ENCODE measurements at regions of chr12 and their contacts with region 1.

Region 1: GRCh38 chr12:115752913-115753726 is 524.4 kb downstream of the MED13L start:
- DNase-seq: peak; percentile 77
- ATAC-seq: peak; percentile 100
- H3K4me3 ChIP-seq: no peak overlapping the region
- H3K27ac ChIP-seq: no peak overlapping the region
- H3K4me1 ChIP-seq: no peaks in the 10 kb centered on the region
- H3K27me3 ChIP-seq: peaks cover 12% of the 10 kb centered on the region
- CTCF ChIP-seq: peak; percentile 81
- POLR2A ChIP-seq: no peak
- RAD21 ChIP-seq: peak; percentile 93

Region 2: GRCh38 chr12:113980537-113981337 is 1772.4 kb before region 1 on chr12:
- CTCF ChIA-PET with region 1: no interaction called
- POLR2A ChIA-PET with region 1: no interaction called
- dilution Hi-C with region 1: no loop called
- in situ Hi-C with region 1: loop called (anchors 25 kb)
- intact Hi-C with region 1: loop called (anchors 5 kb)
- DNase-seq: peak; percentile 74
- ATAC-seq: peak; percentile 96
- H3K4me3 ChIP-seq: no peak overlapping the region
- H3K27ac ChIP-seq: no peak overlapping the region
- H3K4me1 ChIP-seq: no peaks in the 10 kb centered on the region
- H3K27me3 ChIP-seq: peaks cover 15% of the 10 kb centered on the region
- CTCF ChIP-seq: peak; percentile 99
- POLR2A ChIP-seq: peak; percentile 55; the same call in 1 of the 2 replicates
- RAD21 ChIP-seq: peak; percentile 99

Region 3: GRCh38 chr12:114662512-114663177 is 1090.5 kb before region 1 on chr12:
- CTCF ChIA-PET with region 1: no interaction called
- POLR2A ChIA-PET with region 1: no interaction called
- dilution Hi-C with region 1: no loop called
- in situ Hi-C with region 1: no loop called
- intact Hi-C with region 1: loop called (anchors 1 kb)
- DNase-seq: peak; percentile 91
- ATAC-seq: peak; percentile 89
- H3K4me3 ChIP-seq: no peak overlapping the region
- H3K27ac ChIP-seq: no peak overlapping the region
- H3K4me1 ChIP-seq: peaks cover under 1% of the 10 kb centered on the region; the same call in 1 of the 2 replicates
- H3K27me3 ChIP-seq: no peaks in the 10 kb centered on the region
- CTCF ChIP-seq: peak; percentile 98
- POLR2A ChIP-seq: peak; percentile 69
- RAD21 ChIP-seq: peak; percentile 100

Region 4: GRCh38 chr12:114674239-114675047 is 1078.7 kb before region 1 on chr12:
- CTCF ChIA-PET with region 1: interaction called, 3 read pairs
- POLR2A ChIA-PET with region 1: no interaction called
- dilution Hi-C with region 1: no loop called
- in situ Hi-C with region 1: loop called (anchors 5 kb)
- intact Hi-C with region 1: no loop called
- DNase-seq: peak; percentile 64
- ATAC-seq: no peak
- H3K4me3 ChIP-seq: peak overlapping the region; percentile 17
- H3K27ac ChIP-seq: peak overlapping the region; percentile 92
- H3K4me1 ChIP-seq: peaks cover 16% of the 10 kb centered on the region
- H3K27me3 ChIP-seq: no peaks in the 10 kb centered on the region
- CTCF ChIP-seq: no peak
- POLR2A ChIP-seq: peak; percentile 42; the same call in 1 of the 2 replicates
- RAD21 ChIP-seq: no peak

Region 5: DNA sequence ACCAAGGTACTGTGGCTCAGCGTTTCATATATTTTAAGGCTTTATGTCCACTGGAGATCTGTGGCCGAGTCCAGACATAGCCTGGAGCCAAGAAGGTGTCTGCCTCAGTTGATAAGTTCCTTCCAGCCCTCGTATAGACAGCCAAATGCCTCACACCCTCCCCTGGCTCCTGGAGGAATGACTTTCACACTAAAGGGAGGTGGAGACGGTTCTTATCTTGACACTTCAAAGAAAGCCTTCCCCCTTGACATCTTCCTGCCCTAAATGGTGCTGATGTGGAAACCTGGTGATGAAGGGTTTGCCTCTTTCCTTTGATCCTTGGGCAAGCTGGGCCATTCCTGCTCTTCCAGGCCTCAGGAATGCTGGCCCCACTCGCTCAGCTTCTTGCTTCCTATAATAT is 594.3 kb before region 1 on chr12:
- CTCF ChIA-PET with region 1: no interaction called
- POLR2A ChIA-PET with region 1: no interaction called
- dilution Hi-C with region 1: no loop called
- in situ Hi-C with region 1: no loop called
- intact Hi-C with region 1: no loop called
- DNase-seq: no peak
- ATAC-seq: no peak
- H3K4me3 ChIP-seq: no peak overlapping the region
- H3K27ac ChIP-seq: no peak overlapping the region
- H3K4me1 ChIP-seq: no peaks in the 10 kb centered on the region; the same call in 1 of the 2 replicates
- H3K27me3 ChIP-seq: no peaks in the 10 kb centered on the region
- CTCF ChIP-seq: no peak
- POLR2A ChIP-seq: no peak
- RAD21 ChIP-seq: no peak

Region 6: DNA sequence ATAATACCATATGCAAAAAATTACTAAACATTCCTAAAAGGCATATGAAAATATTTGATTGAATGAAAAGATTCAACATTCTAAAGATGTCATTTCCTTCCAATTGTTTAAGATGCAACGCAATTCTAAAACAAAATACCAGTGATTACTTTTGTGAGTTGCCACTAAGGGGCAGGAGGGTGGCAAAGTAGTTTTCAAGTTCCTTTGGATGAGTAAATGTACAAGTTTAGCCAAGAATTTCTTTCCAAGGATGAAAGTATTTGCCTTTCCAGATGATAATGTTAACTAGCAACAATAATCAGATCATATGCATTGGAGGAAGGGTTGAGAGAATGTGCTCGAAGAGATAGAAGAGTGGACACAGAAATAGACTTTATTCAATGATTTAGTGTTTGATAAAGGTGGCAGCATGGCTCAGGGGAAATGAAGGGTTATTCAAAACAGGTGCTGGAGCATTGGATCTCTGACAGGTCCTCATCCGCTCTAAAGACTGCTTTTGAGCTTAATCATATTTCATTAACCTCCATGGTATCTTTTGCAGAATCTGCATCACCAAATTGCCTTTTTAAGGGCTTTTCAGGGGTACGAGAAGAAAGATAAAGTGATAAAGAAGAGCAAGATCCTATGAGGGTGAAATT is 390.7 kb before region 1 on chr12:
- CTCF ChIA-PET with region 1: no interaction called
- POLR2A ChIA-PET with region 1: no interaction called
- dilution Hi-C with region 1: no loop called
- in situ Hi-C with region 1: no loop called
- intact Hi-C with region 1: loop called (anchors 5 kb)
- DNase-seq: peak; percentile 28
- ATAC-seq: no peak
- H3K4me3 ChIP-seq: no peak overlapping the region
- H3K27ac ChIP-seq: no peak overlapping the region
- H3K4me1 ChIP-seq: no peaks in the 10 kb centered on the region
- H3K27me3 ChIP-seq: no peaks in the 10 kb centered on the region
- CTCF ChIP-seq: peak; percentile 28; the same call in 1 of the 2 replicates
- POLR2A ChIP-seq: no peak
- RAD21 ChIP-seq: peak; percentile 18; the same call in 1 of the 2 replicates

Region 7: GRCh38 chr12:115507951-115508722 is 245.0 kb before region 1 on chr12:
- CTCF ChIA-PET with region 1: no interaction called
- POLR2A ChIA-PET with region 1: no interaction called
- dilution Hi-C with region 1: no loop called
- in situ Hi-C with region 1: no loop called
- intact Hi-C with region 1: no loop called
- DNase-seq: no peak
- ATAC-seq: no peak
- H3K4me3 ChIP-seq: no peak overlapping the region
- H3K27ac ChIP-seq: no peak overlapping the region
- H3K4me1 ChIP-seq: no peaks in the 10 kb centered on the region
- H3K27me3 ChIP-seq: no peaks in the 10 kb centered on the region
- CTCF ChIP-seq: no peak
- POLR2A ChIP-seq: no peak
- RAD21 ChIP-seq: no peak